ENCODE measurements at regions of chr2 and their contacts with region 1.

Region 1: DNA sequence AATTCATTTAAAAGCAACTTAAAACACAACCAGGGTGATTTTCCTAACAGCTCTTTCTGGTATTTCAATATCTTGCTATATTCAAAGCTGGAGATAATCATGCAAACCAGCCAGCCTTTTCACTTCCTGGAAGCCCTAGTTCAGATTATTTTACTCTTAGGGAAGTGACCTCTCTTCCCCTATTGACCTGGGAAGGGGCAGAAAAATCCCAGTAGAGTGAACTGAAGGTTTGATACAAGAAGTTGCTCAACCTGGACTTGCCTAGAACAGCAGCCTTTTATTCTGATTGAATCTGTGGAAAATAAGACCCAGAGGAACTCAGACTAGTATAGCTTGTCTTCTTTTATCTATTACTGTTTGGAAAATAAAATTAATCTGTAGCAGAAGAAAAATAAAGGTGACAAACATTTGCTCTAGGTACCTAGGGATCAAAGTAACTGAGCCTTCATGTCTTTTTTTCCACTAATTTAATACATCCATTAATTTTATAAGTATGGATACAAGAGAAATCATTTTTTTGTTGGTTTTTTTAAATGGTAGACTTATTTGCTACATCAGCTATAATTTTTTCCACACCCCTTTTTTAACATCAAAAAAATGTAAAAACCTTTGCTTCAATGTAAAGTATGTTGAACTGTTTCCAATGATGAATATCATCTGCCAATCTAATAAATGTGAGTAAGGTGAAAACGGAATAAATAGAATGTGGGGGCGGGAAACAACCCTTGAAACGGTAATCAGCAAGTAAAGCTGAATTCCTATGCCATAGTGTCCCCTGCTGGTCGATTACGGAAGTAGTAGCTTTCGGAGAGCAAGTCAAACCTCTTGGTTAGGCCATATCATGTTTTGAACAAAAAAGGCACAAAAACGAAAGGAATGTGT is 629.9 kb downstream of the NRXN1 start:
- DNase-seq: peak; percentile 51 to 66
- H3K4me3 ChIP-seq: no peak overlapping the region
- H3K4me3 Mint-ChIP-seq: no peak overlapping the region
- H3K27ac Mint-ChIP-seq: no peak overlapping the region
- H3K4me1 ChIP-seq: no peaks in the 10 kb centered on the region
- H3K4me1 Mint-ChIP-seq: no peaks in the 10 kb centered on the region
- H3K27me3 ChIP-seq: no peaks in the 10 kb centered on the region
- H3K27me3 Mint-ChIP-seq: no peaks in the 10 kb centered on the region
- CTCF ChIP-seq: peak; percentile 82 to 88

Region 2: DNA sequence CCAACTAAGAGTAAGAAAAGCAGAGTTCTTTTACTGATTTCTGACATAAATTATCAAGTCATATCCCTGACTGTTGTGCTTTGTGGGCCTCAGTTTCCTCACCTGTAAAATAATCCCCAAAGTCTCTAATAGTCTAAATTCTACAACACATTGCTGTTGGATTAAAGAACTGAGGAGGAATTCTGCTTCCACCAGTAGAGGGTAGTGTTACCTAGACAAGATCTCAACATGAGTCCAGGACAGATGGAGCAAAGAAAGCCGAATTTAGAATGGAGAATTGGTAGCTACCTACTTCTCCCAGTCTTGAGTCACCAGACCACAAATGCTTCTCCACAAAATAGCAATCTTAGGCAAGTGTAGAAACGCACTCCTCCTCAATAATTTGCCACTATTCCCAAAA is 785.2 kb before region 1 on chr2:
- CTCF ChIA-PET with region 1: interaction called, 5 read pairs
- POLR2A ChIA-PET with region 1: no interaction called
- intact Hi-C with region 1: loop called (anchors 1 kb)
- DNase-seq: peak in 1 of 2 experiments; percentile 42
- H3K4me3 ChIP-seq: no peak overlapping the region
- H3K4me3 Mint-ChIP-seq: no peak overlapping the region
- H3K27ac Mint-ChIP-seq: no peak overlapping the region
- H3K4me1 ChIP-seq: peaks cover 9% of the 10 kb centered on the region
- H3K4me1 Mint-ChIP-seq: no peaks in the 10 kb centered on the region
- H3K27me3 ChIP-seq: no peaks in the 10 kb centered on the region
- H3K27me3 Mint-ChIP-seq: no peaks in the 10 kb centered on the region
- CTCF ChIP-seq: peak; percentile 48 to 67

Region 3: DNA sequence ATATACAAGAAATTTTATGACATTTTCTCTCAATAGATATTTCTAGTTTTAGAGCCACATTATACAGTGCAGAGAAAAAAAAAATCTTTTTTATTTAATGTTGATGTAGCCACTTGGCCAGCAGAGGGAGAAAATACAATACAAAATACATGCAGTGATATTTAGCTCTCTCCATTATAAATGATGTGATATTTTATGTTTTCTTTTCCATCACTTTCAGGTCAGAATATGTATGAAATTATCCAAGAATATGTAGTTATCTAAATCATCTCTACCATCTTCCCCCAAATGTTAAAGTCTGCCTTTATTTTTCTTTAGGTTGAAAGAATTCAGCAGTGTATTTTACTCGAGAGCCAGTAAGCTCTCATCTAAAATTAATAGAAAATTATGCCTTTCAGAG is 714.1 kb before region 1 on chr2:
- CTCF ChIA-PET with region 1: interaction called, 10 read pairs
- POLR2A ChIA-PET with region 1: no interaction called
- intact Hi-C with region 1: loop called (anchors 1 kb)
- DNase-seq: no peak
- H3K4me3 ChIP-seq: no peak overlapping the region
- H3K4me3 Mint-ChIP-seq: no peak overlapping the region
- H3K27ac Mint-ChIP-seq: no peak overlapping the region
- H3K4me1 ChIP-seq: no peaks in the 10 kb centered on the region
- H3K4me1 Mint-ChIP-seq: no peaks in the 10 kb centered on the region
- H3K27me3 ChIP-seq: no peaks in the 10 kb centered on the region
- H3K27me3 Mint-ChIP-seq: peaks cover 3% of the 10 kb centered on the region
- CTCF ChIP-seq: peak in 1 of 2 experiments; percentile 27

Region 4: GRCh38 chr2:50143822-50144575 is 258.0 kb before region 1 on chr2:
- CTCF ChIA-PET with region 1: no interaction called
- POLR2A ChIA-PET with region 1: no interaction called
- intact Hi-C with region 1: loop called (anchors 1 kb)
- DNase-seq: peak in 1 of 2 experiments; percentile 37
- H3K4me3 ChIP-seq: peak overlapping the region; percentile 5; the same call in 1 of the 2 replicates
- H3K4me3 Mint-ChIP-seq: peak overlapping the region; percentile 47
- H3K27ac Mint-ChIP-seq: no peak overlapping the region
- H3K4me1 ChIP-seq: no peaks in the 10 kb centered on the region
- H3K4me1 Mint-ChIP-seq: no peaks in the 10 kb centered on the region
- H3K27me3 ChIP-seq: no peaks in the 10 kb centered on the region
- H3K27me3 Mint-ChIP-seq: peaks cover 3% of the 10 kb centered on the region
- CTCF ChIP-seq: peak; percentile 60 to 66

Region 5: GRCh38 chr2:50344509-50345106 is 57.4 kb before region 1 on chr2:
- CTCF ChIA-PET with region 1: no interaction called
- POLR2A ChIA-PET with region 1: no interaction called
- intact Hi-C with region 1: loop called (anchors 1 kb)
- DNase-seq: peak in 1 of 2 experiments; percentile 6
- H3K4me3 ChIP-seq: no peak overlapping the region
- H3K4me3 Mint-ChIP-seq: no peak overlapping the region
- H3K27ac Mint-ChIP-seq: no peak overlapping the region
- H3K4me1 ChIP-seq: no peaks in the 10 kb centered on the region
- H3K4me1 Mint-ChIP-seq: no peaks in the 10 kb centered on the region
- H3K27me3 ChIP-seq: no peaks in the 10 kb centered on the region
- H3K27me3 Mint-ChIP-seq: peaks cover 14% of the 10 kb centered on the region
- CTCF ChIP-seq: peak; percentile 15 to 16

Region 6: GRCh38 chr2:50492477-50492851 is 90.5 kb after region 1 on chr2:
- CTCF ChIA-PET with region 1: no interaction called
- POLR2A ChIA-PET with region 1: no interaction called
- intact Hi-C with region 1: loop called (anchors 5 kb)
- DNase-seq: peak; percentile 35 to 61
- H3K4me3 ChIP-seq: no peak overlapping the region
- H3K4me3 Mint-ChIP-seq: no peak overlapping the region
- H3K27ac Mint-ChIP-seq: no peak overlapping the region
- H3K4me1 ChIP-seq: no peaks in the 10 kb centered on the region
- H3K4me1 Mint-ChIP-seq: no peaks in the 10 kb centered on the region
- H3K27me3 ChIP-seq: no peaks in the 10 kb centered on the region
- H3K27me3 Mint-ChIP-seq: peaks cover 12% of the 10 kb centered on the region
- CTCF ChIP-seq: peak; percentile 59 to 69